ENCODE measurements at regions of chr19 and their contacts with region 1.

Region 1: DNA sequence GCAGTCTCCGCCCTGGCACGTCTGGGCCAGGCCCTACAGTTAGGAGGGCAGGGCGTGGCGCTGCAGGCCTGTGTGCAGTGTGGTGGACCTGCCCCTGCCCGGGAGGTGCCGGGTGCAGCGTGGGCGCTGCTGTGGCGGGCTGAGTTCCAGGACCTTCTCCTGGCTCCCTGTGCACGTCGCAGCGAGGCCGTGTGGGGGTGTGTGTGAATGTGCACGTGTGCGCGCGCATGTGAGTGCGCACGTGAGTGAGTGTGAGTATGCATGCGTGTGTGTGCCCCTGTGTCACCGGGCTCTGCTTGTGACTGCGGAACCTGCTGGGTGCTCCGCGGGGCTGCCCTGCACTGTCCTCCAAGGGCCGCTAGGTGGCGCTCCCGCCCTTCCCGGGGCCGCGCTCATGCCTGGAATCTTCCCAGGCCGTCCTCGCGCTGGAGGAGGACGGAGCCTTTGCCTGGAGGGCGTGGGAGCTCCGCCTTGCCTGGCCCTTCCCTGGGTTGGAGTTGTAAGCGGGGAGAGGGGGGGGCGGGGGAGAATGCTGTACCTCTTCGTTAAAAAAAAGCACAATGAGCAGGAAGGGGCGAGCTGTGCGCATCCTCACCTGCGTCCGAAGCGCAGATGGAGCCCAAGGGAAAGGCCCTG is 79.3 kb downstream of the KDM4B start:
- DNase-seq: peak; percentile 65 to 97
- H3K4me3 ChIP-seq: no peak overlapping the region
- H3K27ac ChIP-seq: no peak overlapping the region
- H3K4me1 ChIP-seq: peaks cover 0 to 8% (median 2%) of the 10 kb centered on the region in 4 experiments; a peak in 5 of 7 replicates
- H3K27me3 ChIP-seq: no peaks in the 10 kb centered on the region
- CTCF ChIP-seq: peak; percentile 98 to 99 (median 99)
- EP300 ChIP-seq: no peak
- POLR2A ChIP-seq: no peak
- RAD21 ChIP-seq: peak; percentile 99

Region 2: GRCh38 chr19:4993683-4994082 is 54.5 kb before region 1 on chr19:
- CTCF ChIA-PET with region 1: no interaction called
- POLR2A ChIA-PET with region 1: no interaction called
- DNase-seq: no peak
- H3K4me3 ChIP-seq: no peak overlapping the region
- H3K27ac ChIP-seq: no peak overlapping the region
- H3K4me1 ChIP-seq: no peaks in the 10 kb centered on the region; a peak in 1 of 7 replicates
- H3K27me3 ChIP-seq: no peaks in the 10 kb centered on the region
- CTCF ChIP-seq: no peak
- EP300 ChIP-seq: no peak
- POLR2A ChIP-seq: no peak
- RAD21 ChIP-seq: no peak

Region 3: GRCh38 chr19:5078182-5078581 is 30.0 kb after region 1 on chr19:
- CTCF ChIA-PET with region 1: interaction called, 19 read pairs
- POLR2A ChIA-PET with region 1: no interaction called
- DNase-seq: no peak
- H3K4me3 ChIP-seq: no peak overlapping the region
- H3K27ac ChIP-seq: 0 out of 2 replicates have a peak overlapping the region, but pooled peaks have one; percentile 42
- H3K4me1 ChIP-seq: peaks cover 7 to 10% (median 10%) of the 10 kb centered on the region in 4 experiments; a peak in 5 of 7 replicates
- H3K27me3 ChIP-seq: no peaks in the 10 kb centered on the region
- CTCF ChIP-seq: no peak
- EP300 ChIP-seq: no peak
- POLR2A ChIP-seq: no peak
- RAD21 ChIP-seq: no peak

Region 4: GRCh38 chr19:5103061-5103701 is 55.0 kb after region 1 on chr19:
- CTCF ChIA-PET with region 1: interaction called, 73 read pairs
- POLR2A ChIA-PET with region 1: no interaction called
- DNase-seq: no peak
- H3K4me3 ChIP-seq: no peak overlapping the region
- H3K27ac ChIP-seq: no peak overlapping the region
- H3K4me1 ChIP-seq: no peaks in the 10 kb centered on the region; a peak in 1 of 7 replicates
- H3K27me3 ChIP-seq: no peaks in the 10 kb centered on the region
- CTCF ChIP-seq: no peak
- EP300 ChIP-seq: no peak
- POLR2A ChIP-seq: no peak
- RAD21 ChIP-seq: no peak

Region 5: DNA sequence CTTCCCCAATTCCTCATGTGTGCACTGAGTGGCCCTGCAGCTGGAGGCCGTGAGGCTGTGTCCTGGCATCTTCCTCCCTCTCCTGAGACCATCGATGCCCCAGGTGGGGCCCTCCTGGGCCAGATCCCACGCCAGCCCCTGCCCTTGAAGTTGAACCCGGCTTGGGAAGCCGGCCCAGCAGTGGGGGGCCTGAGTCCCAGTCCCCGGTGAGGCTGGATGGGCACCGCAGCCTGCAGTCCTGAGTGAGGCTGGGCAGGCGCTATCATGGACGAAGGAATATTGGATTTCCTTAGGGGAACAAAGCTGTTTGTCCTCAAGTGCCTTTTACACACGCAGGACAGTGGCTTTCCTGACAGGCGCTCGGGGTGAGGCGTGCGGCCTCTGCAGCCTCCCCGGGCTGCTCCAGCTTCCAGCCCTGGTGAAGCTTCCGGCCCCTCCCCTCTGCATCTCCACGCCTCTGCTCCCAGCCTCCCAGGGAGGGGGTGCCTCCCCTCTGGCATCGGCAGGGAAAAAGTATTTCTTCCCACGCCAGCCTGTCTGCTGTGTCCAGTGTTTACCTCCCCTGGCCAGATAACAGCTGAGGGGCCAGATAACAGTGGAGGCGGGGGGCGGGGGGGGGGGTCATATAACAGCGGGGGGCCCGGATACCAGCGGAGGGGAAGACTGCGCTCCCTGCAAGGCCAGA is 80.2 kb after region 1 on chr19:
- CTCF ChIA-PET with region 1: interaction called, 18 read pairs
- POLR2A ChIA-PET with region 1: interaction called, 3 read pairs
- DNase-seq: no peak
- H3K4me3 ChIP-seq: no peak overlapping the region
- H3K27ac ChIP-seq: no peak overlapping the region
- H3K4me1 ChIP-seq: peaks cover 5 to 57% (median 48%) of the 10 kb centered on the region in 4 experiments
- H3K27me3 ChIP-seq: no peaks in the 10 kb centered on the region
- CTCF ChIP-seq: no peak
- EP300 ChIP-seq: no peak
- POLR2A ChIP-seq: no peak
- RAD21 ChIP-seq: no peak

Region 6: DNA sequence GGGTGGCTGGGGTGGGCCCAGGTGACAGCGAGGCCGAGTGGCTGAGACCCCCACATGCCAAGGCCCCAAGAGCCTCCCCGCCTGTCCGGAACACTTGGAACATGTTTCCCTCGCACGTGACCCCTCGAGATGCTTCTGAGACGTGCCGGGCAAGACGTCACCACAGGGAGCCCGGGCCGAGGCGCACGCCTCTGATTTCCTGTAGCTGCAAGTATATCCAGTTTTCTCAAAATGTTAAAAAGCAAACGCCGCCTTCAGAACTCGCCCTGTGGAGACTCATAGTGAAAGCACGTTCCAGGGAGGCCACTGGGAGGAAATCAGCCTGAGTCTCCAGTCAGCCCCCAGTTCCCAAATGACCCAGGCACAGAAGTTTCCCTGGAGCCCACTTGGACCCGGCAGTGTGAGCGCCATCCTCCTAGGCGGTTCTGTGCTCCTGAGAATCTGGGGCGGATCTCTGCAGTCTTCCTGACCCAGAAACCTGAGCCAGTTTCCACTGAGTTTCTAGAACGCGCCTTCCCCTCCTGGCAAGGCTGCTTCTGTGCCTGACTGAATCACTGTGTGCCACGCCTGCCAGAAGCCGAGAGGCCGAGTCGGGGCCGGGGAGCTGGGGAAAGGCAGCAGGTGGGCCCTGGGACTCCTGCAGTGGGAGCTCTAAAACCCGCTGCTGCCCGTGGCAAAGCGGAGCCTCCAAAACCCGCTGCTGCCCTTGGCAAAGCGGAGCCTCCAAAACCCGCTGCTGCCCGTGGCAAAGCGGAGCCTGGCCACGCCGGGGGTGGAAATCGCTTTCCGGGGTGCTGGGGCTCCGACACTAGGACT is 100.0 kb after region 1 on chr19:
- CTCF ChIA-PET with region 1: interaction called, 28 read pairs
- POLR2A ChIA-PET with region 1: interaction called, 4 read pairs
- DNase-seq: no peak
- H3K4me3 ChIP-seq: no peak overlapping the region
- H3K27ac ChIP-seq: no peak overlapping the region
- H3K4me1 ChIP-seq: peaks cover 0 to 17% (median 11%) of the 10 kb centered on the region in 4 experiments; a peak in 5 of 7 replicates
- H3K27me3 ChIP-seq: no peaks in the 10 kb centered on the region
- CTCF ChIP-seq: no peak
- EP300 ChIP-seq: no peak
- POLR2A ChIP-seq: no peak
- RAD21 ChIP-seq: no peak

Measured in H1 (cell line).